ENCODE measurements at regions of chr13 and their contacts with region 1.

Region 1: DNA sequence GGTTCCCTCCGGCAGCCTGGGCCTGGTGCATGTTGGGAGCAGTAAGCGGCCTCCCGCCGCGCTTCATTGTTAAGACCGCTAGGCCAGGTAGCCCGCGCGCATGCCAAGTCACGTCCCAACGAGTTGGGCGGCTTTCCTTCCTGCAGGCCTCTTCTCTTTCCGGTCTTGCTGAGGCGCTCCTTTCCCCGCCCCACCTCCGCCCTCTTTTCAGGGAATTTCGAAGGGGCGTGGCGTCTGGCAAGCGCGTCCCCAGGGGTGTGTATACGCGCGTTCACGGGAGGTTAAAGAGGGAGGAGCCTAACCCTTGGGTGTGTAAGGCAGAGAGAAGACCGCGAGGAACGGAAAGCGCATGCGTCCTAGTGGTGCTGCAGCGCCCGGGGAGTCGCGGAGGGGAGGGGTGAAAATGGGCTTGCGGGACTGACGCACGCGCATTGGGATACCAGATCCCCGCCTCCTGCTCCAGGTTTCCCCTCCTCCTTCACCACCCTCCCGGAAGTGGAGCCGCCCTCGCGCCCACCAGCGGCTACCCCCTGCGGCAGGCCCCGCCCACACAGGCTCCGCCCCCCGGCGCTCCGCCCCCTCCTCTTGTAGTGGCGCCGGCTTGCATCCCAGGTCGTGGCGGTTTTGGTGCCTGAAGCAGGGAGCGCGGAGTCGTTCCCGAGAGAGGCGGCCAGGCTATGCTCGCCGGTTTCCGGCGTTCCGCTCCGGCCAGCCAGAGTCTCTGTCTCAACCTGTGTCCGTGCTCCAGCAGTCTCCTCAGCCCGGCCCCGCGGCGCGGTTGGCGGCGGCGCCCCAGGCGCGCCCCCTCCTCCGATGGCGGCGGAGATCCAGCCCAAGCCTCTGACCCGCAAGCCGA is at the start of gene WDFY2:
- DNase-seq: peak; percentile 100
- H3K4me3 ChIP-seq: peak within 1 kb of the TSS; percentile 38 to 95 (median 84)
- H3K27ac ChIP-seq: peak within 1 kb of the TSS; percentile 68 to 97 (median 82)
- H3K4me1 ChIP-seq: peaks cover 13 to 38% of the 10 kb centered on the region in 2 donors
- H3K27me3 ChIP-seq: no peaks in the 10 kb centered on the region
- CTCF ChIP-seq: peak in 4 of 6 experiments; percentile 21 to 41 (median 26)
- POLR2A ChIP-seq: peak; percentile 91 to 97
- total RNA-seq, gene WDFY2: 14.9 to 38.6 (median 30.2) TPM

Region 2: DNA sequence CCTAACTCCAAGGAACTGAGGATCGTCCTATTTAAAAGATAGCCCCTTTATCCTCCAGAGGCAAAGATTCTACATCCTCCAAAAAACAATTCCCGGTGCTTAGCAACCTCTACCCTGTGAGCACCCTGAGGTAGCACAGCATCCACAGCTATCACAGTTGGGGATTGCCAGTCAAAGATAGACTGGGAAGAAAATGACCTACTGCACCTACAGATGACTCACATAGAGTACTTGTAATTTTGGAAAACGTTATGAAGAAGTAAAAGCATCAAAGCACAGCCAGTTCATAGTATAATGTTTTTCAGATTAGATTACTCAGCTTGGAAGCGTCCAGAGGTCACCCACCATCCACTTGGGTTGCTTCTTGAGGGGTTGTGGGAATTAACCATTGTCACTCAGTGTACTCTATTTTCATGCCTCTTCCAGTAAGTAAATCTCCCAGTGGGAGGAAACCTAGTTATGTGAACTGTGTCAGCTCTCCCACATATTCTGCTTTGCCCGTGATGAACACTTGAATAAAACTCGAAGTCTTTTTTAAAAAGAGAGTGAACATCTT is 370.9 kb before region 1 on chr13:
- intact Hi-C with region 1: no loop called
- DNase-seq: no peak
- H3K4me3 ChIP-seq: no peak overlapping the region
- H3K27ac ChIP-seq: no peak overlapping the region
- H3K4me1 ChIP-seq: no peaks in the 10 kb centered on the region
- H3K27me3 ChIP-seq: peaks cover 8% of the 10 kb centered on the region
- CTCF ChIP-seq: no peak
- POLR2A ChIP-seq: no peak

Region 3: GRCh38 chr13:51452361-51453206 is 131.5 kb before region 1 on chr13 and contains the start of gene INTS6:
- intact Hi-C with region 1: loop called (anchors 2 to 10 kb)
- DNase-seq: peak; percentile 99 to 100 (median 100)
- H3K4me3 ChIP-seq: peak within 1 kb of the TSS; percentile 66 to 92 (median 77)
- H3K27ac ChIP-seq: peak within 1 kb of the TSS; percentile 96 to 99 (median 98)
- H3K4me1 ChIP-seq: peaks cover 11 to 42% of the 10 kb centered on the region in 2 donors
- H3K27me3 ChIP-seq: no peaks in the 10 kb centered on the region
- CTCF ChIP-seq: no peak
- POLR2A ChIP-seq: peak; percentile 99 to 100
- total RNA-seq, gene INTS6: 24.2 to 82.4 (median 37.2) TPM

Region 4: GRCh38 chr13:51844862-51845573 is 260.9 kb after region 1 on chr13 and contains the start of gene TMEM272:
- intact Hi-C with region 1: no loop called
- DNase-seq: peak; percentile 32 to 70 (median 56)
- H3K4me3 ChIP-seq: peak within 1 kb of the TSS in 1 of 4 donors; percentile 16
- H3K27ac ChIP-seq: no peak within 1 kb of the TSS
- H3K4me1 ChIP-seq: peaks cover 0 to 9% of the 10 kb centered on the region in 2 donors
- H3K27me3 ChIP-seq: no peaks in the 10 kb centered on the region
- CTCF ChIP-seq: peak; percentile 56 to 89 (median 73)
- POLR2A ChIP-seq: no peak
- total RNA-seq, gene TMEM272: 0.17 TPM in 1 of 9 donors, not detected in the others

Measured in adrenal gland (tissue), 19 donors.